ENCODE measurements at regions of chr11 and their contacts with region 1.

Region 1: DNA sequence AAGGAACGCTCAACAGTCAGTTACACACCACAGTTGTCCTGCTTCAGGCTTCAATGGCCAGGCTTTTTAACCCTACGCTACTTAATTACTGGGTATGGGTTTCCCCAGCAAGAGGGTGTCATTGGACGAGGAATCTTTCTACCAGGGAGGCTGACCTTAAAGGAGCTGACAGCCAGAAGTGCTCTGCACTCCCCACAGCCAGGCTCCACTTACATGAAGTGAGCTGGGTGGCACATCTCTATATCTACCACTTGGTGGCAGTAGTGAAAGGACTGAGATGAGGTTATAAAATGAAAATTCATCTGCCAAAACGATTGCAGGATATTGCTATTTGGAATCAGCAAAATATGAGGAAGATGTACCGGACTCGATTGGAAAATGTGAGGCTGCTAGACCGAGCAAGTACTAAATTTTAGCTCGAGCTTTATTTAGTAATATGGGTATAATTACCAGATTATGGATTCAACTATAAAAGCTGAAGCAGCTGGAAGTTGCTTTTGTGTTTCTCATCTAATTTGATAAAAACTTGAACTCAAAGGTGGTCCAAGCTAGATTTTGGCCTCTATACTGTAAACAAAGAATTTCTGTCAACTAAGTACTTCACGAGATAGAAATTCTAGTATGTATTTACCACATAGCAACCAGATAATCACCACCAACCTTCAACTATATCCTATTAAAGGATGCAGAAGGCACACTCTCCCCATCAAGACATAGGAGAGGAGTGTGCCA is 53.9 kb upstream of the CEP126 start:
- DNase-seq: peak; percentile 52
- ATAC-seq: peak; percentile 70
- H3K4me3 ChIP-seq: no peak overlapping the region
- H3K4me3 Mint-ChIP-seq: no peak overlapping the region
- H3K27ac ChIP-seq: no peak overlapping the region
- H3K27ac Mint-ChIP-seq: no peak overlapping the region
- H3K4me1 ChIP-seq: no peaks in the 10 kb centered on the region
- H3K4me1 Mint-ChIP-seq: no peaks in the 10 kb centered on the region
- H3K27me3 ChIP-seq: peaks cover 0 to 9% (median 1%) of the 10 kb centered on the region in 4 experiments
- H3K27me3 Mint-ChIP-seq: peaks cover 21% of the 10 kb centered on the region
- CTCF ChIP-seq: peak; percentile 88

Region 2: DNA sequence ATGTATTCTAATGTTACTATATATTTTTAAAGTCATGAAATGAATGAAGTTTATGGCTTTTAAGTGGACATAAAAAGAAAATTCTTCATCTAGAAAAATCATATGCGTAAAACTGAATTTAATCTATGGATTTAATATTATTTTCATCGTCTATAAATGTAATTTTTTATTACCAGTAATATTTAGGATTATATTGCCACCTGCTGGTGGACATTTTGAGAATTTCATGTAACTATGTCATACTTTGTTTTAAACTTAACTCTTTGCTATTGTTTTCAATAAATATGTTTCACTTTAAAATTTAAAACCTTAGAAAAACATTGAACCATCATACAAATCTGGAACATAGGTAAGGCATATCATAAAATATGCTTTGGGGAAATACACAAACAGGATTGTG is 12.6 kb before region 1 on chr11:
- CTCF ChIA-PET with region 1: interaction called, 12 read pairs
- POLR2A ChIA-PET with region 1: no interaction called
- intact Hi-C with region 1: no loop called
- DNase-seq: peak; percentile 11
- ATAC-seq: no peak
- H3K4me3 ChIP-seq: no peak overlapping the region
- H3K4me3 Mint-ChIP-seq: no peak overlapping the region
- H3K27ac ChIP-seq: no peak overlapping the region
- H3K27ac Mint-ChIP-seq: no peak overlapping the region
- H3K4me1 ChIP-seq: no peaks in the 10 kb centered on the region
- H3K4me1 Mint-ChIP-seq: no peaks in the 10 kb centered on the region
- H3K27me3 ChIP-seq: peaks cover 0 to 4% (median 0%) of the 10 kb centered on the region in 4 experiments
- H3K27me3 Mint-ChIP-seq: peaks cover 8% of the 10 kb centered on the region
- CTCF ChIP-seq: peak; percentile 28

Region 3: DNA sequence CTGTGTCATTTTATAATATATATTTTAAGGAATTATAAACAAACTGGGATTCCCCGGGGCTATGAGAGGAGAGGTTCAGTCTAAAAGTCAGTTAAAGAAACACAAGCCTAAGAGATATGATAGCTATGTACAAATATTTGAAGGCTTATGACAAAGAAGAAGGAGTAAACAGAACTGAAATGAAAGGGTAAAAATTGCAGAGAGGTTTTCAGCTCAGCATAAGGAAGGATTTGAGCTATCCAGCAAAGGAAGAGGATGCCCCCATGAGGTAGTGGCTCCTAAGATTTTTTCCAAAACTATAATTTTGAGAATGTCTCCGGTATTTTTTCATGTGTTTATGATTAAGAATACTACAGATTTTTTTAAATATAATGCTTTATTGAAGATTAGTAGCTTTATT is 113.4 kb after region 1 on chr11:
- CTCF ChIA-PET with region 1: interaction called, 15 read pairs
- POLR2A ChIA-PET with region 1: no interaction called
- intact Hi-C with region 1: no loop called
- DNase-seq: no peak
- ATAC-seq: no peak
- H3K4me3 ChIP-seq: no peak overlapping the region
- H3K4me3 Mint-ChIP-seq: no peak overlapping the region
- H3K27ac ChIP-seq: no peak overlapping the region
- H3K27ac Mint-ChIP-seq: no peak overlapping the region
- H3K4me1 ChIP-seq: no peaks in the 10 kb centered on the region
- H3K4me1 Mint-ChIP-seq: no peaks in the 10 kb centered on the region
- H3K27me3 ChIP-seq: no peaks in the 10 kb centered on the region
- H3K27me3 Mint-ChIP-seq: no peaks in the 10 kb centered on the region
- CTCF ChIP-seq: no peak

Region 4: GRCh38 chr11:102007567-102008437 is 146.9 kb after region 1 on chr11:
- CTCF ChIA-PET with region 1: interaction called, 423 read pairs
- POLR2A ChIA-PET with region 1: no interaction called
- intact Hi-C with region 1: loop called (anchors 1 kb)
- DNase-seq: peak; percentile 52
- ATAC-seq: no peak
- H3K4me3 ChIP-seq: no peak overlapping the region
- H3K4me3 Mint-ChIP-seq: no peak overlapping the region
- H3K27ac ChIP-seq: no peak overlapping the region
- H3K27ac Mint-ChIP-seq: no peak overlapping the region
- H3K4me1 ChIP-seq: no peaks in the 10 kb centered on the region
- H3K4me1 Mint-ChIP-seq: no peaks in the 10 kb centered on the region
- H3K27me3 ChIP-seq: peaks cover 0 to 6% (median 5%) of the 10 kb centered on the region in 4 experiments
- H3K27me3 Mint-ChIP-seq: peaks cover 19% of the 10 kb centered on the region
- CTCF ChIP-seq: peak; percentile 81